Right cardiac atrium (tissue), 5 donors: ENCODE measurements at regions of chr17 and their contacts with region 1.

Region 1: GRCh38 chr17:60514053-60514452 is 12.0 kb downstream of the APPBP2 start:
- DNase-seq: no peak
- ATAC-seq: no peak
- H3K4me3 ChIP-seq: no peak overlapping the region
- H3K27ac ChIP-seq: no peak overlapping the region
- H3K4me1 ChIP-seq: no peaks in the 10 kb centered on the region
- H3K27me3 ChIP-seq: no peaks in the 10 kb centered on the region

Region 2: GRCh38 chr17:60468371-60468770 is 45.7 kb before region 1 on chr17:
- intact Hi-C with region 1: loop called in 1 of 4 experiments (anchors 10 kb)
- DNase-seq: no peak
- ATAC-seq: no peak
- H3K4me3 ChIP-seq: no peak overlapping the region
- H3K27ac ChIP-seq: no peak overlapping the region
- H3K4me1 ChIP-seq: no peaks in the 10 kb centered on the region
- H3K27me3 ChIP-seq: no peaks in the 10 kb centered on the region

Region 3: GRCh38 chr17:60610473-60610872 is 96.4 kb after region 1 on chr17:
- intact Hi-C with region 1: no loop called
- DNase-seq: no peak
- ATAC-seq: no peak
- H3K4me3 ChIP-seq: no peak overlapping the region
- H3K27ac ChIP-seq: no peak overlapping the region
- H3K4me1 ChIP-seq: no peaks in the 10 kb centered on the region
- H3K27me3 ChIP-seq: no peaks in the 10 kb centered on the region